GM10248 (cell line): ENCODE measurements at regions of chr9 and their contacts with region 1.

Region 1: GRCh38 chr9:114452219-114453165 is 52.8 kb downstream of the WHRN start:
- DNase-seq: peak; percentile 22
- CTCF ChIP-seq: no peak

Region 2: GRCh38 chr9:114434878-114435311 is 17.6 kb before region 1 on chr9:
- CTCF ChIA-PET with region 1: interaction called, 24 read pairs
- POLR2A ChIA-PET with region 1: no interaction called
- DNase-seq: peak; percentile 62
- CTCF ChIP-seq: peak; percentile 63

Region 3: GRCh38 chr9:114465903-114466530 is 13.5 kb after region 1 on chr9:
- CTCF ChIA-PET with region 1: no interaction called
- POLR2A ChIA-PET with region 1: no interaction called
- DNase-seq: no peak
- CTCF ChIP-seq: no peak